PC-9 (cell line): ENCODE measurements at regions of chr6 and their contacts with region 1.

Region 1: DNA sequence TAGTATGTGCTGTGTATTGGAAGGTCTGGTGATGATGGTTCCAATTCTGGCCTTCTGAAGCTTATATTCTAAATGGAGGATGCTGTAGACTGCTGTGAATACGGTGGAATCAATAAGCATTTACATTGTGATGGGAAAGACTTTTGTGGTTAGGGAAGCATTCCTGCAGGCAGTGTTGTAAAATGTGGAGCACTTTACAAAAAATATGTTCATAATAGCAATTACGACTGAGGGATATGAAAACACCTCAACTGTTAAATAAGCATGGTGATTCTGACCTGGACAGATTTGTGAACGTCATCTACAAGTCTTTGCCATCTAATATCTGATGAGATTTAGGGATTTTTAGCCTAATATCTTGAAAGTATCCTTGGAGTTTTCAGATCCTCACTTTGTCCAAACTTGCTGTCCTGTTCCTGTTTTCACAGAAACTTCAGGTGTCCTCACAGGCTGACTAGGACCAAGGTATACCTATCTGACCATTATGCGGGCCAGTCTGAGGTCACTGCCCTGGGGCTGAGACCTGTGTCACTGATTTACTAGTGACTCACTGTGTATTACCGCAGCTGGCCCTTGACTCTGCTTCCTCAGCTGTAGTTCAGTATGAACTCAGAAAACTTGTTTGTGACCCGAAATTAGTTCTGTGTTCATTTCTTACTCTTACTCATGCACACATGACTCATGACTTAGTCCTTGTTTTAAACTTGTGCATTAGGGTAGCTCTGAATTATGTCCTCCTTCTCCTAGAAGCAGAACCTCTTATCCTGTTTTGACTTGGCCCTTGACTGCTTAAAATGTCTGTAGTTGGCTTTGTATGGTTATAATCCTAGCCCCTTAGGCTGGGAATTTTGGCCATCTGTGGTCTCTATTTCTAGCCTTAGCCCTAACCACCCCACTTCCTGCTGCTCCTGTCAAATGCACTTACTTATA is 343.0 kb downstream of the CDKAL1 start:
- DNase-seq: peak; percentile 89 to 99
- H3K4me3 ChIP-seq: 0 out of 2 replicates have a peak overlapping the region, but pooled peaks have one; percentile 0
- H3K27ac ChIP-seq: peak overlapping the region; percentile 90
- H3K4me1 ChIP-seq: peaks cover 42% of the 10 kb centered on the region
- H3K27me3 ChIP-seq: no peaks in the 10 kb centered on the region
- CTCF ChIP-seq: no peak

Region 2: DNA sequence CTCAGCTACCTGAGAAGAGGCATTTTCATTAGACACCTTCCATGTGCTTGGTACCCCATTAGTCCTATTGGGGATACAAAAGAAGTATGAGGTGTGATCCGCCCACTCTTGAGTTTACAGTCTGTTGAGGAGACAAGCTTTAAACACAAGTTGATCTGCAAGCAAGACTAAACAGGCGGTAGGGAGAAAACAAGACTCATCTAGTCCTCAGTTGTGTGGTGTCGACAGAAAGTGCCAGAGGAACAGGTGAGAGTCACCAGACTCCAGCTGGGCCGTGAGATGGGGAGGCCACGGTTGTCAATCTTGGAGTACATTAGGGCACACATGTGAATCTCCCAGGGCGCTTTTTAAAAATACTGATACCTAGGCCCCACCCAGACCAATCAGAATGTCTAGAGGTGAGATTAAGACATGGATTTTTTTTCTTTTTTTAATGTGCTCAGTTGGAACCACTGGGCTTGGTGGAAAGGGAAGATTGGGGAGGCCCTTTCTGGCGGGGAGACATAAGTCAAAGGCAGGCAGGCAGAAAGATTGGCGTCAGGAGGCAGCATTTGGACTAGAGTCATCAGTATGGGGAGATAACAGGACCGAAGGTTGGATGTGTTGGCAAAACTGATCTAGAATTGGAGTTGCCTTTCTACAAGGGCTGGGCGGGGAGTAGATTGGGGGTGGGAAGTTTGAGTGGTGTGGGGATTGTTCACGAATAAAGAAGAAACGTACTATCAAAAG is 465.2 kb before region 1 on chr6:
- CTCF ChIA-PET with region 1: no interaction called
- POLR2A ChIA-PET with region 1: no interaction called
- intact Hi-C with region 1: no loop called
- DNase-seq: no peak
- H3K4me3 ChIP-seq: no peak overlapping the region
- H3K27ac ChIP-seq: no peak overlapping the region
- H3K4me1 ChIP-seq: no peaks in the 10 kb centered on the region
- H3K27me3 ChIP-seq: no peaks in the 10 kb centered on the region
- CTCF ChIP-seq: no peak

Region 3: GRCh38 chr6:20564269-20564668 is 313.0 kb before region 1 on chr6:
- CTCF ChIA-PET with region 1: no interaction called
- POLR2A ChIA-PET with region 1: no interaction called
- intact Hi-C with region 1: loop called (anchors 5 kb)
- DNase-seq: no peak
- H3K4me3 ChIP-seq: no peak overlapping the region
- H3K27ac ChIP-seq: no peak overlapping the region
- H3K4me1 ChIP-seq: no peaks in the 10 kb centered on the region
- H3K27me3 ChIP-seq: no peaks in the 10 kb centered on the region
- CTCF ChIP-seq: peak; percentile 79

Region 4: DNA sequence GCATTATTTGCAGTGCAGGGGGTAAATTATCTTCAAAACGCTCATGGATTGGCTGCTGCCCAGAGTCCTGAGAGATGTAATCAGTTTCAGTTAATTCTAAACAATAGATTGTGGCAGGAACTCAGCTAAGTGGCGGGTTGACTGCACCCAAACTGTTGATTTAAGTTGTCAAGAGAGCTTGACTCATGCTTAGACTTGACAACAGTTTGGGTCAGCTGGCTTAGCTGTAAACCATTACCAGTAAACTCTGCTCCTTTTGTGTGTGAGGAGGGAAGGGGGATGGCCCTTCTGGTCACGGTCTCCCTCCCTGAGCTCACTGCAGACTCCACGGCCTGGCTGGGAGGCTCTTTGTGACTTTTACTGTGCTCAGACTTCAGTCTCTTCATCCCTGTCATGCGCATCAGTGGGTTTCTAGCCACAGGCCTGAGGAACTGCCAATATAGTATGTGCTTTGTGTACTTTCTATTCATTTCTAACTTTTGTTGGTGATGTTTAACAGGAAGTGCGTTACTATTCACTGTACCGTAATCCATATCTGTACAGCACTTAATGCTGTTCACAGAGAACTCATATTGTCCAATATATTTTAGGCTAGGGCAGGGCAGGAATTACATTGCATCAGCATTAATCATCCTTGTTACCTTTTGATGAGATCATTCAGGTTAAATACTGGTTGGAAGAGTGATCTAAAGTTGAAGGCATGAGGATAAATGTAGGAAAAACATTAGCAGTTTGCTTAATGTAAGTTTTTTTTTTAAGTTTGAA is 145.3 kb after region 1 on chr6:
- CTCF ChIA-PET with region 1: no interaction called
- POLR2A ChIA-PET with region 1: no interaction called
- intact Hi-C with region 1: loop called (anchors 1 kb)
- DNase-seq: peak; percentile 62 to 77
- H3K4me3 ChIP-seq: no peak overlapping the region
- H3K27ac ChIP-seq: peak overlapping the region; percentile 78
- H3K4me1 ChIP-seq: peaks cover 26% of the 10 kb centered on the region
- H3K27me3 ChIP-seq: no peaks in the 10 kb centered on the region
- CTCF ChIP-seq: no peak

Region 5: DNA sequence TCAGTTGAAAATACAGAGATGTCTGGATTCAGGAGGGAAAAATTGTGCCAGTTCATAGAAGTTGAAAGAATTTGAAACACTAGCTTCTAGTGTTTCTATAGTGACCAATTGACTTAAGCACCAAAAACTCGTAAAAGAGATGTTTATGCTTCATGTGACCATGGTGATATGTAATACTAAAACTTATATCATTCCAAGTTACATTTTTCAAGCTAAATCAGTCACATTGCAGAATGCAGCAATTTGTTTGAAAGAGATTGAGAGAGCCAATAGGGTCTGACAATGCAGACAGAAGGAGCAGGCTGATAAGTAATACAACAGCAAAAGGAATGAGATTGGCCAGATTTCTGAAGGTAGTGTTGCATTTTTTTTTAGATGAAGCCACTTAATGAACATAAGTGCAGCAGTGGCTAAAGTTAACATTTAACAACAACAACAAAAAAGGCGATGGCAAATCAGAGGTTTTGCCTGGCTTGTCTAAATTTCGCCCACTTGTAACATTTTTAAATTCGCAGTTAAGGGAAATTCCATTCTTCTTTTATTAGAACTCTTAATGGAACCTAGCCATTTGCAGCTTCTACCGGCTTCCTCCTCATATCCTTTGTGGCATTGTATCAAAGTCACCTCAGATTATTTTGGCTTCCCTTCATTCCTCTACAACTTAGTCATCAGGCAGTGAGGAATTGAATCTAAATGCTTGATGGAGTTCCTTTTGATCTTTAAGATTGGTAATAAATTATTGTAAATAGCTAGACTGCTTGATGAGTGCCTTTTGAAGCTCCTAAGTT is 232.3 kb after region 1 on chr6:
- CTCF ChIA-PET with region 1: no interaction called
- POLR2A ChIA-PET with region 1: no interaction called
- intact Hi-C with region 1: loop called (anchors 2 kb)
- DNase-seq: peak; percentile 20 to 86
- H3K4me3 ChIP-seq: no peak overlapping the region
- H3K27ac ChIP-seq: peak overlapping the region; percentile 32
- H3K4me1 ChIP-seq: peaks cover 48% of the 10 kb centered on the region
- H3K27me3 ChIP-seq: no peaks in the 10 kb centered on the region
- CTCF ChIP-seq: no peak

Region 6: GRCh38 chr6:21277601-21278374 is 400.5 kb after region 1 on chr6:
- CTCF ChIA-PET with region 1: no interaction called
- POLR2A ChIA-PET with region 1: no interaction called
- intact Hi-C with region 1: loop called (anchors 2 kb)
- DNase-seq: peak; percentile 62 to 74
- H3K4me3 ChIP-seq: no peak overlapping the region
- H3K27ac ChIP-seq: no peak overlapping the region
- H3K4me1 ChIP-seq: 0 out of 2 replicates have a peak, but pooled peaks cover 3% of the 10 kb centered on the region
- H3K27me3 ChIP-seq: no peaks in the 10 kb centered on the region
- CTCF ChIP-seq: no peak

Region 7: DNA sequence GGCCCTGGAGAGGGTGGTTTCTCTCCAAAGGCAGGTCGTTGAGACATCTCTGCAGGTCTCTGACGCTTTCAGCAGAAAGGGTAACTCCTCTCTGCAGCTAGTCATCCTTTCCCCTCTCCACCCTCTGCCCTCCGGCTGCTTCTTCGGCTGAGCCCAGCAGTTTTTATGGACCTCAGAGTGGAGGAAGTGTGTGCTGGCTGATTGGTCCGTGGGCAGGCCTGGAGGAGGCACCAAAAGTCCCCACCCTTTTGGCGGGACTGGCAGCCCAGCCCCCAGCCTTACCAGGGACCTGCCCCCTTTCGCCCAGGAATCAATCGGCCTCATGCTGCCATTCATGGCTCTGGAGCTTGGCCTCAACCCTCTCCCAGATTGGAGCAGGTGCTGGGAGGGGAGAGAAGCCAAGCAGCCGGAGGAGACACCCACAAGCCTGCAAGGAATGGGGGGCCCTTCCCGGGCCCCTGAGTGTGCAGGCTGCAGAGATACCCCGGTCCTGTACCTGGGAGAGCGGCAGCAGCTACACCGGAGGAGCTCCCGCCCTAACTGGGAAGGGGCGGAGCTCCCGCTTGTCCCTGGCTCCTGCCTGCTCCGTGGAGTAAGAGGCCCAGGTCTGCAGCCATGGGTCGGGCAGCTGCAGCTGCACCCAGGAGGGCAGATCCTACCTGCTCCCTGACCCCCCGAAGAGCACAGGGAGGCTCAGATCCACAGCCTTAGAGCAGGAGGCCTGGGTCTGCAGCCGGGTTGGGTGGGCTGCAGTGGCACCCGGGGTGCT is 546.0 kb after region 1 on chr6:
- CTCF ChIA-PET with region 1: no interaction called
- POLR2A ChIA-PET with region 1: no interaction called
- intact Hi-C with region 1: no loop called
- DNase-seq: no peak
- H3K4me3 ChIP-seq: peak overlapping the region; percentile 24; the same call in 1 of the 2 replicates
- H3K27ac ChIP-seq: no peak overlapping the region
- H3K4me1 ChIP-seq: no peaks in the 10 kb centered on the region
- H3K27me3 ChIP-seq: no peaks in the 10 kb centered on the region
- CTCF ChIP-seq: no peak